ENCODE measurements at regions of chr7 and their contacts with region 1.

Region 1: GRCh38 chr7:45923290-45923689 is 2.2 kb upstream of the IGFBP3 start:
- DNase-seq: no peak
- ATAC-seq: peak; percentile 45; the same call in 1 of the 2 replicates
- H3K4me3 ChIP-seq: no peak overlapping the region
- H3K27ac ChIP-seq: no peak overlapping the region
- H3K4me1 ChIP-seq: peaks cover 3 to 27% of the 10 kb centered on the region in 2 experiments; a peak in 2 of 4 replicates
- H3K27me3 ChIP-seq: peaks cover 8% of the 10 kb centered on the region; the same call in 1 of the 2 replicates
- CTCF ChIP-seq: peak; percentile 82 to 97 (median 93)
- POLR2A ChIP-seq: no peak
- RAD21 ChIP-seq: peak; percentile 93

Region 2: DNA sequence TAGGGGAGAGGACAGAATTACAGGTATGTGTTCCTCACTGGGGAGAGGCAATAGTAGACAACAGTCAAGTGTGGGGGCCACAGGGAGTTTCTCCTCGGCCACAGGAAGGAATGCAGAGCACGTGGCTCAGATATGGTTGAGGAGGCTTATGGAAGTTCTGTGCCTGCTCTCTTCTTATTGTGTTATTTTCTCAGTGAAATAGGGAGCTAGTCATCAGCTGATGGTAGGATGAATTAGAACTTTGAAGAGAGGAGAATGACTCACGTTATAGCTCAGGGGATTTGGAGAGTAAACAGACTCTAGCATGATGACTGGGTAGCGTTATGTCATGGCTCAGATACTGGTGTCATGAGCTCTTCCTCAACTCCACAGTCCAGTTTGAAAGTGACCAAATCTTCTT is 306.1 kb after region 1 on chr7:
- CTCF ChIA-PET with region 1: no interaction called
- POLR2A ChIA-PET with region 1: no interaction called
- RAD21 ChIA-PET with region 1: no interaction called
- intact Hi-C with region 1: no loop called
- DNase-seq: no peak
- ATAC-seq: no peak
- H3K4me3 ChIP-seq: no peak overlapping the region
- H3K27ac ChIP-seq: no peak overlapping the region
- H3K4me1 ChIP-seq: no peaks in the 10 kb centered on the region
- H3K27me3 ChIP-seq: 0 out of 2 replicates have a peak, but pooled peaks cover 3% of the 10 kb centered on the region
- CTCF ChIP-seq: no peak
- POLR2A ChIP-seq: no peak
- RAD21 ChIP-seq: no peak

Region 3: DNA sequence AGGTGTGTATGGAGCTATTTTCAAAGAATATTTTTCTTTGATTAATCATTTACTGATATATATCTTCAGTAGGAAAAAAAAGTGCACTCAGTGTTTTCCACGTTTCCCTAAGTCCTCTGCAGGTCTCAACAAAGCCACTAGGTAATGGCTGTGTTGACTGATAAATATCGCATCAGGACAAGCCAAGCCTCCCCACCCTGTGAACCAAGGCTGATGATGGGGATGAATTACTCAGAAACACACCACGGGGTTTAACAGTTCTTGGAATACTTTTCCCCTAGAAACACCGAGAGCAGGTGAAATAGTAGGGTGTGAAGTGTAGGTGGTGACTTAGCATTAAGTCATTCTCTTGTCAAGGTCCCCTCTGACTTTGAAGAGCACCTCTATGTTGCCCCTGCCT is 421.2 kb after region 1 on chr7:
- CTCF ChIA-PET with region 1: interaction called, 27 read pairs
- POLR2A ChIA-PET with region 1: no interaction called
- RAD21 ChIA-PET with region 1: no interaction called
- intact Hi-C with region 1: no loop called
- DNase-seq: no peak
- ATAC-seq: no peak
- H3K4me3 ChIP-seq: no peak overlapping the region
- H3K27ac ChIP-seq: no peak overlapping the region
- H3K4me1 ChIP-seq: no peaks in the 10 kb centered on the region
- H3K27me3 ChIP-seq: no peaks in the 10 kb centered on the region
- CTCF ChIP-seq: no peak
- POLR2A ChIP-seq: no peak
- RAD21 ChIP-seq: no peak

Region 4: DNA sequence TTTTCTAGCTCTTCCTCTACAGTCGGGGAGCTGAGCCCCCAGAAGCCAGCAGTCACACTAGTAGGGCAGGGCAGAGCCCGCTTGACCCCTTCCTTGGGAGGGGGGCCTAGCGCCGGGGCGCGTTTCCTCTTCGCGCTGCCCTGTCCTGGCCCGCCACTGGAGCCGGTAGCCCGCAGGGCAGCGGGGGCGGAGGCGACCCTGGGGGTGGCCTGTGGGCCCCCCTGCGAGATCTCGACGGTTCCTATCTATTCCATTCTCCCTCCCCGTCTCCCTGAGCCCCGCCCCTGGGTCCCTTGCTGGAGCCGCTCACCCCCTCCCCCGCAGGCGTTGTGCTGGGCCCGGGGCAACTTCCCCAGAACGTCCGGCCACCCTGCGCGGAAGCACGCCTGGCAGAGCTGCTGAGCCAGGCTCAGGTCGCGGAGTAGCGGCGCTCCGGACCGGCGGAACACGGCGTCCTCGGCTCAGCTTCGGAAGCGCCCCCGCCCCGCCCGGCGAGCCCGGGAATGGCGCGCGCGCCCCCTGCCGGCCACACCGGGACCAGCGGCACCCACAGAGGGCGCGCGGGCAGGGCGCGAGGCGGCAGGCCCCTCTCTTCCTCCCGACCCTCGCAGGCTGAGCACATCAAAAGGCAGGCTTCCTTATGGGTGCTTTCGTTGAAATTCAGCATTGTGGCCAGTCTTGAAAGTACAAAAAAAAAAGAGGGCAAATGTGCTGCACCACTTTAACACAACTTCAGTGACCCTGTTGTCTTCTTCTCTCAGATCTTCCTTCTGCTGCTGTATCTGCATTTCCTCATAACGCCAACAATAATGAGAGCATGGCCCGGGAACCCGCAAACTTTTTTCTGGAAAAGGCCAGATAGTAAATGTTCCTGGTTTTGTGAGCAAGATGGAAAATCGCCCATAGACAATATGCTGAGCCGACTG is 1331.1 kb after region 1 on chr7:
- CTCF ChIA-PET with region 1: no interaction called
- POLR2A ChIA-PET with region 1: no interaction called
- RAD21 ChIA-PET with region 1: no interaction called
- intact Hi-C with region 1: loop called (anchors 2 kb)
- DNase-seq: no peak
- ATAC-seq: peak; percentile 87
- H3K4me3 ChIP-seq: peak overlapping the region; percentile 57 to 65
- H3K27ac ChIP-seq: peak overlapping the region; percentile 72
- H3K4me1 ChIP-seq: peaks cover 8 to 18% of the 10 kb centered on the region in 2 experiments
- H3K27me3 ChIP-seq: no peaks in the 10 kb centered on the region
- CTCF ChIP-seq: peak; percentile 67 to 89 (median 75)
- POLR2A ChIP-seq: no peak
- RAD21 ChIP-seq: peak; percentile 64